Dendritic cell treated with granulocyte-macrophage colony-stimulating factor and Interleukin-4, amounts not matched to agents 40 ng/mL and 50 ng/mL, for 4 days (primary cell): ENCODE measurements at regions of chr3 and their contacts with region 1.

Region 1: GRCh38 chr3:33439546-33440322 is 471 bp downstream of the UBP1 start:
- H3K4me3 Mint-ChIP-seq: peak overlapping the region; percentile 100
- H3K27ac Mint-ChIP-seq: peak overlapping the region; percentile 100
- H3K4me1 Mint-ChIP-seq: peaks cover 34% of the 10 kb centered on the region
- H3K27me3 Mint-ChIP-seq: no peaks in the 10 kb centered on the region

Region 2: DNA sequence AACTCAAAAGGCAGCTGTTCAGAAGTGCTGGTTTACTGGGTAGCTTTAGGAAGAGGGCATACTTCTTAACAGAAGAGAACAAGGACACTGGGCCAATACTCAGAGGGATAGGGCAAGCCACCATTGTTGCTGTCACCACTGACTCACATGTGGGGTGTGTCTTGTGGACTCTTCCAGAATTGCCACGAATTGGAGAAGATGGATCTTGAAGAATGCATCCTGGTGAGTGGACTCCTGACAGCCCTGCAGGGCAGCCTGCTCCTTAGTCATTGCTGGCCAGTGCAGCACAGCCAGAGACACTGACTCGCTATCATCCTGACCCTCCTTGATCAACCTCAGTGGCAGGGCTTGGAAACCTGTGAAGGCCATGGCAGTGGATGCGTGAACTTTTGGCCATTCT is 61.8 kb before region 1 on chr3:
- intact Hi-C with region 1: no loop called
- H3K4me3 Mint-ChIP-seq: no peak overlapping the region
- H3K27ac Mint-ChIP-seq: no peak overlapping the region
- H3K4me1 Mint-ChIP-seq: peaks cover 3% of the 10 kb centered on the region
- H3K27me3 Mint-ChIP-seq: no peaks in the 10 kb centered on the region

Region 3: DNA sequence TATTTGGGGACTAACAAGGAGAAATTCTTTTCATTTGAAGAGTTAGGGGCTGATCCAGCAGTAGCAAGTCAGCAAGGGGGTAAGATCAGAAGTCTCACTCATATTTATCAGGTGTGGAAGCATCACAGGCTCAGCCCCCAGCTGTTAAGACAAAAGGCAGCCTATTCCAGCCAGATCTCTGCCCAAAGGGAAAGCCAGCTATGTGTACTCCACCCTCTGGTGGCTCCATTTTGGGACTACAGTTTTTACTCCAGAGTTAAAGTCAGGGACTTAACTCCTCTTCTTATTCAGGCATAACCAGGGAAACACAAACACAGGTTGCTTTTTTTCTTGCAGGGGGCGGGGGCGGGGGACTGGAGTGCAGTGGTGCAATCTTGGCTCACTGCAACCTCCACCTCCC is 18.8 kb before region 1 on chr3:
- intact Hi-C with region 1: loop called (anchors 2 kb)
- H3K4me3 Mint-ChIP-seq: no peak overlapping the region
- H3K27ac Mint-ChIP-seq: peak overlapping the region; percentile 82
- H3K4me1 Mint-ChIP-seq: peaks cover 49% of the 10 kb centered on the region
- H3K27me3 Mint-ChIP-seq: no peaks in the 10 kb centered on the region

Region 4: DNA sequence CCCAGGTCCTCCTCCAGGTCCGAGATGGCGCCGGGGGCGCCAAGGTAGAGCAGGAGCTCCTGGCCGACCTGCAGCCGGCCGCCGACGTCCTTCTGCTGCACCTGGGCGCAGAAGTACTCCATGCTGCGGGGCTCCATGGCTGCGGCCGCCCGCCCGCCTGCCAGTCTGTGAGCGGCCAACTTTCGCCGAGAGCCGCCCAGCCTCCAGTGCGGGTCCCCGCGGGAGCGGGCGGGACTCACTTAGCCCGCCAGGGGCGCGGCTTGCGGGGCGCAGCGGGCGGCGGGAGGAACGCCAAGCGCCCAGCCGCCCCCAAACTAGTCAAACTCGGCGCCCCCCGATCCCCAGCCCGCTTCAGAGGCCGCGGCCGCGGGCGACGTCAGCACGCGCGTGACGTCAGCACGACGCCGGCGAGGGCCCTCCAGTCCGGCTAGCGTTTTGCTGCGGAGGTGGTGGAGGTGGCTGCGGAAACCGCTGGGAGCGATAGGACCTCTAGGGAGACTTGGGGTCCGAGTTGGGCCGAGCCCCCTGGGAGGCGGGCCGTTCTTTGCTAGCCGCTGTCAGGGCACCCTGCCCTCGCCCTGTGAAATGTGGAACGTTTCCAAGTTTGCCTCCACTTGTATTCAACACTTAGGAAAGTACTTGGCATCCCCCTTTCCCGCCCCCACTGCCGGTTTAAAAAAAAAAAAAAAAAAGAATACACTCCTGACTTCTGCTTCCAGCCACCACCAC is 278.3 kb after region 1 on chr3 and contains the start of gene CLASP2:
- intact Hi-C with region 1: loop called (anchors 5 kb)
- H3K4me3 Mint-ChIP-seq: peak within 1 kb of the TSS; percentile 97
- H3K27ac Mint-ChIP-seq: no peak within 1 kb of the TSS
- H3K4me1 Mint-ChIP-seq: peaks cover 6% of the 10 kb centered on the region
- H3K27me3 Mint-ChIP-seq: no peaks in the 10 kb centered on the region

Region 5: DNA sequence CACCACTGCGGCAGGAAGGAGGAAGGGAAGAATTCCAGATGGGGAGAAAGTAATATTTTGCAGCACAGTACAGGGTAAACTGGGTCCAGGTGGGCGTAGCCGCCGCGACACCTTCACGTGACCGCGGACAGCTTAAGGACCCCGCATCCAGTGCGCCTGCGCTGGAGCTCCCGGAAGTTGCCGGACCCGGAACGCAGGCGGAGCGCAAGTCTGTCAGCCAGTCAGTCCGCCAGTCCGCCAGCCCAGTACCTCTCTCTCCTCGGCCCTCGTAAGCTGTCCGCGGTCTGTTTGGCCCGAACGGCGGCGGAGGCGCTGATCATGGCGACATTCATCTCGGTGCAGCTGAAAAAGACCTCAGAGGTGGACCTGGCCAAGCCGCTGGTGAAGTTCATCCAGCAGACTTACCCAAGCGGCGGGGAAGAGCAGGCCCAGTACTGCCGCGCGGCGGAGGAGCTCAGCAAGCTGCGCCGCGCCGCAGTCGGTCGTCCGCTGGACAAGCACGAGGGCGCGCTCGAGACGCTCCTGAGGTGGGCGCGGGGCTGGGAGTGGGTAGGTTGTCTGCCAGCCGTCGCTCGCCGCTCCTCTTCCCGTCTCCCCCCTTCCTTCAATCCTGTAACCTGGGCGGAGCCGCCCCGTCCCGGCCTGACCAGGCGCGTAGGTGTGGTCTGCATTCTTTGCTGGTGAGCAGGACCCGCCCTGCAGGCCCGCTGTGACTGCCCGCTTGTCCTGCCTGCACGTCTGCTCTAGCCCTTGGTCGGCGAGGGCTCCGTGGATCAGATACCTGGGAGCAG is 358.9 kb after region 1 on chr3 and contains the start of gene PDCD6IP:
- intact Hi-C with region 1: loop called (anchors 10 kb)
- H3K4me3 Mint-ChIP-seq: peak within 1 kb of the TSS; percentile 95
- H3K27ac Mint-ChIP-seq: peak within 1 kb of the TSS; percentile 95
- H3K4me1 Mint-ChIP-seq: peaks cover 56% of the 10 kb centered on the region
- H3K27me3 Mint-ChIP-seq: no peaks in the 10 kb centered on the region